ENCODE measurements at regions of chr17 and their contacts with region 1.

Region 1: GRCh38 chr17:29293890-29294579 is at the start of gene NUFIP2:
- DNase-seq: peak; percentile 95
- ATAC-seq: peak; percentile 83
- H3K4me3 Mint-ChIP-seq: peak within 1 kb of the TSS; percentile 100
- H3K27ac Mint-ChIP-seq: peak within 1 kb of the TSS; percentile 100
- H3K4me1 Mint-ChIP-seq: peaks cover 45% of the 10 kb centered on the region
- H3K27me3 Mint-ChIP-seq: no peaks in the 10 kb centered on the region
- CTCF ChIP-seq: no peak
- total RNA-seq, gene NUFIP2: 61.0 and 61.8 TPM in 2 replicates

Region 2: GRCh38 chr17:29140051-29140621 is 153.9 kb before region 1 on chr17:
- CTCF ChIA-PET with region 1: interaction called, 16 read pairs
- POLR2A ChIA-PET with region 1: interaction called, 21 read pairs
- intact Hi-C with region 1: loop called (anchors 1 kb)
- DNase-seq: peak; percentile 51
- ATAC-seq: peak; percentile 62
- H3K4me3 Mint-ChIP-seq: peak overlapping the region; percentile 88
- H3K27ac Mint-ChIP-seq: peak overlapping the region; percentile 97
- H3K4me1 Mint-ChIP-seq: peaks cover 72% of the 10 kb centered on the region
- H3K27me3 Mint-ChIP-seq: no peaks in the 10 kb centered on the region
- CTCF ChIP-seq: no peak

Region 3: GRCh38 chr17:29180034-29180787 is 113.8 kb before region 1 on chr17 and contains the start of gene MYO18A:
- CTCF ChIA-PET with region 1: no interaction called
- POLR2A ChIA-PET with region 1: interaction called, 10 read pairs
- intact Hi-C with region 1: no loop called
- DNase-seq: peak; percentile 80
- ATAC-seq: peak; percentile 98
- H3K4me3 Mint-ChIP-seq: peak within 1 kb of the TSS; percentile 57
- H3K27ac Mint-ChIP-seq: no peak within 1 kb of the TSS
- H3K4me1 Mint-ChIP-seq: peaks cover 13% of the 10 kb centered on the region
- H3K27me3 Mint-ChIP-seq: peaks cover 9% of the 10 kb centered on the region
- CTCF ChIP-seq: no peak
- total RNA-seq, gene MYO18A: 67.8 and 79.8 TPM in 2 replicates

Region 4: GRCh38 chr17:29219378-29220047 is 74.5 kb before region 1 on chr17:
- CTCF ChIA-PET with region 1: interaction called, 3 read pairs
- POLR2A ChIA-PET with region 1: no interaction called
- intact Hi-C with region 1: loop called (anchors 2 kb)
- DNase-seq: peak; percentile 52
- ATAC-seq: peak; percentile 88
- H3K4me3 Mint-ChIP-seq: no peak overlapping the region
- H3K27ac Mint-ChIP-seq: no peak overlapping the region
- H3K4me1 Mint-ChIP-seq: peaks cover 8% of the 10 kb centered on the region
- H3K27me3 Mint-ChIP-seq: peaks cover 2% of the 10 kb centered on the region
- CTCF ChIP-seq: peak; percentile 20

Region 5: GRCh38 chr17:29273924-29274323 is 20.1 kb before region 1 on chr17:
- CTCF ChIA-PET with region 1: no interaction called
- POLR2A ChIA-PET with region 1: interaction called, 12 read pairs
- intact Hi-C with region 1: loop called (anchors 2 kb)
- DNase-seq: no peak
- ATAC-seq: no peak
- H3K4me3 Mint-ChIP-seq: no peak overlapping the region
- H3K27ac Mint-ChIP-seq: no peak overlapping the region
- H3K4me1 Mint-ChIP-seq: peaks cover 43% of the 10 kb centered on the region
- H3K27me3 Mint-ChIP-seq: no peaks in the 10 kb centered on the region
- CTCF ChIP-seq: no peak

Region 6: GRCh38 chr17:29369831-29370735 is 76.0 kb after region 1 on chr17:
- CTCF ChIA-PET with region 1: interaction called, 3 read pairs
- POLR2A ChIA-PET with region 1: interaction called, 12 read pairs
- intact Hi-C with region 1: loop called (anchors 5 kb)
- DNase-seq: peak; percentile 29
- ATAC-seq: peak; percentile 92
- H3K4me3 Mint-ChIP-seq: no peak overlapping the region
- H3K27ac Mint-ChIP-seq: no peak overlapping the region
- H3K4me1 Mint-ChIP-seq: no peaks in the 10 kb centered on the region
- H3K27me3 Mint-ChIP-seq: no peaks in the 10 kb centered on the region
- CTCF ChIP-seq: peak; percentile 46

Region 7: GRCh38 chr17:29568331-29569244 is 274.6 kb after region 1 on chr17 and contains the start of gene TP53I13:
- CTCF ChIA-PET with region 1: no interaction called
- POLR2A ChIA-PET with region 1: interaction called, 5 read pairs
- intact Hi-C with region 1: loop called (anchors 5 kb)
- DNase-seq: peak; percentile 83
- ATAC-seq: peak; percentile 65
- H3K4me3 Mint-ChIP-seq: peak within 1 kb of the TSS; percentile 97
- H3K27ac Mint-ChIP-seq: peak within 1 kb of the TSS; percentile 97
- H3K4me1 Mint-ChIP-seq: peaks cover 32% of the 10 kb centered on the region
- H3K27me3 Mint-ChIP-seq: no peaks in the 10 kb centered on the region
- CTCF ChIP-seq: no peak
- total RNA-seq, gene TP53I13: 65.1 and 71.2 TPM in 2 replicates